ENCODE measurements at regions of chr1 and their contacts with region 1.

Region 1: GRCh38 chr1:172745014-172745413 is 86.1 kb downstream of the FASLG start:
- DNase-seq: peak; percentile 85
- H3K4me3 ChIP-seq: no peak overlapping the region
- H3K27ac ChIP-seq: no peak overlapping the region
- H3K4me1 ChIP-seq: peaks cover 34% of the 10 kb centered on the region
- CTCF ChIP-seq: peak; percentile 92

Region 2: DNA sequence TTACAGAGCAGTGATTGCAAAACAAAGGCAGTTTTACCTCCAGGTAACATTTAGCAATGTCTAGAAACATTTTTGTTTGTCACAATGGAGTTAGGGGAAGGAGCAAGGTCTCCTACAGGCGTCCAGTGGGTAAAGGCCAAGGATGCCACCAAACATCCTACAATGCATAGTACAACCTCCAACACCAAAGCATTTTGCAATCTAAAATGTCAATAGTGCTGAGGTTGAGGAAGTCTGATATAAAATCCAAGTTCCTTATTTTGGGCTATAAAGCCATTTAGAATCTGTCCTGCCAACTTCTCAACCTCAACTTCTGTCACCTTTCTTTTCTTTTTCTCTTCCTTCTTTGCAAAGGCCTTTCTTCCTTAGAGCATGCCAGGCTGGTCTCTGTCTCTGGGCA is 25.1 kb after region 1 on chr1:
- CTCF ChIA-PET with region 1: no interaction called
- POLR2A ChIA-PET with region 1: no interaction called
- intact Hi-C with region 1: no loop called
- DNase-seq: no peak
- H3K4me3 ChIP-seq: no peak overlapping the region
- H3K27ac ChIP-seq: no peak overlapping the region
- H3K4me1 ChIP-seq: peaks cover 1% of the 10 kb centered on the region
- CTCF ChIP-seq: no peak

Region 3: DNA sequence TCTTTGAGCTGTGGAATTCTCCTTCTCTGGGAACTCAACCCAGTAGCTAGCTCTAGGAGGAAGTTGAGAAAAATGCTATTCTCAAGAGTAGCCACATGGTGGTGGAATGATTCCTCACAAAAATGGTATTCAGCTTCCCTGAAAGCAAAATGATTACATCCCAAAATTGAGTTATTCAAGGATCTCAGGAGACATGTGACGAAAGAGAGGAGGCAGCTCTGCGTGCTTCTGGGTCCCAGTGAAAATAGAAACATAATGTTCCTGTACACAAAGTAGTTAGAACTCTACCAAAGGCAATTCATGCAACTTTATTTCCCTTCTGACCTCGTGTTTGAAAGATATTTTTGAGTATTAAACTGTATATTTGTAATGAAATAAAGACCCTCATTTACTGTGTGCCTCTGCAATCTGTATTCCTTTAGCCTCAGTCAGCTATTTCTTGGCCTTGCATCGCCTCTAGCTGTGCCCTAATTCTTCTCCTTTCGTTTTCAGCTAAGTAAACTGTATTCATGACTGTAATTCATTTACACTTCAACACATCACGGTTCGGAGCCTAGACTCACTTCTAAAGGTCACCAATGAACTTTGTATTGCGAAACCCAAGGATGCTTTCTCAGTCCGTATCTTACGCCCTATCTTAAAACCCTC is 81.2 kb after region 1 on chr1:
- CTCF ChIA-PET with region 1: interaction called, 6 read pairs
- POLR2A ChIA-PET with region 1: no interaction called
- intact Hi-C with region 1: loop called (anchors 1 kb)
- DNase-seq: peak; percentile 53
- H3K4me3 ChIP-seq: no peak overlapping the region
- H3K27ac ChIP-seq: no peak overlapping the region
- H3K4me1 ChIP-seq: peaks cover 15% of the 10 kb centered on the region
- CTCF ChIP-seq: peak; percentile 86

Region 4: DNA sequence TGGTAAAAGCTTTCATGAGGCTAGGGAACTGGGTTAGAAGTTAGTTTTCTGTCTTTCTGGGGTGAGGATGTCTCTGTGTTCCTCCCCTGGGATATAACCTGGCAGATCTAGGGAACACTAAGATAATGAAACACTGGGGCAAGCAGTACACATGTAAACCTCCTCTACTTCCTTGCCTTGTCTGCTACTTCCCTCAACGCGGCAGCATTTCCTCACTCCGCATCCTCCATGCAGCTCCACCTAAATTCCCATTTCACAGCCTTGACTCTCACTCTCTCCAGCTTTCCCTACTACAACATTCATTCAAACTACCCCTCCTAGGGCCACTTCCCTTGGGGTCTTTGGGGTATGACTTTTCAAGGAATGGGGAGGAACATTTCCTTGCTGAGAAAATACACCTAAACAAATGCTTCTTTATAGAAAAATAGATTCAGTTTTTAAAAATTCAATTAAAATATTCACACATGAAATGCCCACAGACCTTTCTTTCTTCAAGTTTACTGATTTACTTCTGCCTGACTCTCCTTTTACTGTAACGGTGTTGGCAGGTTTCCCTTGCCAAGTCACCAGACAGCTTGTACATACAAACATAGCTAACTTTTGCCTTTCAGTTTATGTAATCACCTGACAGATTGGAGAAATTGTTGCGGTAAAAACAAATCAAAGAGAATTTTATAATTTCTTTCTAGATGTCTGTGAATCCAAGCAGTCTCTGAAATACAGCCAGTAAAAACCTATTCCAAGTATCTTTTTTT is 215.6 kb after region 1 on chr1:
- CTCF ChIA-PET with region 1: no interaction called
- POLR2A ChIA-PET with region 1: no interaction called
- intact Hi-C with region 1: no loop called
- DNase-seq: no peak
- H3K4me3 ChIP-seq: no peak overlapping the region
- H3K27ac ChIP-seq: no peak overlapping the region
- H3K4me1 ChIP-seq: no peaks in the 10 kb centered on the region
- CTCF ChIP-seq: no peak

Region 5: DNA sequence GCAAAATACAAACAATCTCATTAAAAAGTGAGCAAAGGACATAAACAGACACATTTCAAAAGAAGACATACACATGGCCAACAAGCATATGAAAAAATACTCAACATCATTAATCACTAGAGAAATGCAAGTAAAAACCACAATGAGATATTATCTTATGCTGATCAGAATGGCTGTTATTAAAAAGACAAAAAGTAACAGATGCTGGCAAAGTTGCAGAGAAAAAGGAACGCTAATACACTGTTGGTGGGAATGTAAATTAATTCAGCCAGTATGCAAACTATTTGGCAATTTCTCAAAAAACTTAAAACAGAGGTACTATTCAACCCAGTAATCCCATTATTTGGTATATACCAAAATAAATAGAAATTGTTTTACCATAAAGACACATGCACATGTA is 337.9 kb after region 1 on chr1:
- CTCF ChIA-PET with region 1: no interaction called
- POLR2A ChIA-PET with region 1: no interaction called
- intact Hi-C with region 1: no loop called
- DNase-seq: no peak
- H3K4me3 ChIP-seq: no peak overlapping the region
- H3K27ac ChIP-seq: no peak overlapping the region
- H3K4me1 ChIP-seq: no peaks in the 10 kb centered on the region
- CTCF ChIP-seq: no peak

Region 6: GRCh38 chr1:173112129-173112528 is 367.1 kb after region 1 on chr1:
- CTCF ChIA-PET with region 1: no interaction called
- POLR2A ChIA-PET with region 1: no interaction called
- intact Hi-C with region 1: loop called (anchors 10 kb)
- DNase-seq: peak; percentile 78
- H3K4me3 ChIP-seq: no peak overlapping the region
- H3K27ac ChIP-seq: peak overlapping the region; percentile 29
- H3K4me1 ChIP-seq: peaks cover 28% of the 10 kb centered on the region
- CTCF ChIP-seq: no peak

Region 7: GRCh38 chr1:173420330-173420806 is 675.4 kb after region 1 on chr1:
- CTCF ChIA-PET with region 1: no interaction called
- POLR2A ChIA-PET with region 1: interaction called, 3 read pairs
- intact Hi-C with region 1: loop called (anchors 2 kb)
- DNase-seq: peak; percentile 79
- H3K4me3 ChIP-seq: no peak overlapping the region
- H3K27ac ChIP-seq: peak overlapping the region; percentile 42
- H3K4me1 ChIP-seq: peaks cover 50% of the 10 kb centered on the region
- CTCF ChIP-seq: peak; percentile 92

Region 8: GRCh38 chr1:173824331-173825081 is 1079.5 kb after region 1 on chr1 and contains the starts of genes CENPL and DARS2:
- CTCF ChIA-PET with region 1: no interaction called
- POLR2A ChIA-PET with region 1: no interaction called
- intact Hi-C with region 1: loop called (anchors 10 kb)
- DNase-seq: peak; percentile 98
- H3K4me3 ChIP-seq: peak within 1 kb of the TSS; percentile 97
- H3K27ac ChIP-seq: peak within 1 kb of the TSS; percentile 93
- H3K4me1 ChIP-seq: peaks cover 56% of the 10 kb centered on the region
- CTCF ChIP-seq: no peak
- total RNA-seq, gene CENPL: 25.4 and 47.0 TPM in 2 replicates
- total RNA-seq, gene DARS2: 42.4 and 45.6 TPM in 2 replicates